GM13977 (cell line): ENCODE measurements at regions of chr4 and their contacts with region 1.

Region 1: DNA sequence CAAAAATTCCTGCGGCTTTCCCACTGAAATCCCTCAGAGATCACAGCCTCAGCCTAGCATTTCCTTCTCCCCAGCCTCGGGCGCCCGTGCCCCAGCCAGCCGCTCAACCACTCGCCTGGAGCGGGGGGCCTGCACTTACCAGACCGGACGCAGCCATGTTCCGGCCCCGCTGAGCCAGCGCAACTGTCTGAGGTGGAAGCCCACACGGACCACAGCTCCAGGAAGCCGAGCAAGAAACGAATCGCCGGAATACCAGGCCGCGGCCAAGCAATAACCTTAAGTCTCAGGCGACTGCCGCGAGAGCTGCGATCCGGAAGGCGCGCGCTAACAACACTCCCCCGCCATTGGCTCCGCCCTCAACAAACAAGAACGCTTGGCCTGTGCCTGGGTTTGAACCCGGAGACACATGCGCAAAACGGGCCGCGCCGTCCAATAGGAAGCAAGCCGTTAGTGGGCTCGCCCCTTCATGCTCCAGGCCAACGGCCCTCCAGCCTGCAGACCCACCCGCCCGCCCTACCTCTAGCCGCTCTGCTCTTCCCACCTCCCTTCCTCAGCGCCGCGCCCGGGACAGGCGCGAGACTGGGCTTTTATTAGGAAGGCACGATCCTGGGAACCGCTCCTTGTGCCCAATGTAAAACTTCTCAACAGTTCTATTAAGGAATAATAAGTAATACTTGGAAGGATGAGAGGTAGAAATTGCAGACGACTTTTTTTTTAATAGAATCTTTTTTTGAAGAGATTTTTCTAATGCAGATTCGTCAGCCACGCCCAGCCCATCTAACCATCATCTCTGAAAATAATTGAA is at the start of gene CENPC:
- DNase-seq: peak; percentile 86
- CTCF ChIP-seq: no peak

Region 2: DNA sequence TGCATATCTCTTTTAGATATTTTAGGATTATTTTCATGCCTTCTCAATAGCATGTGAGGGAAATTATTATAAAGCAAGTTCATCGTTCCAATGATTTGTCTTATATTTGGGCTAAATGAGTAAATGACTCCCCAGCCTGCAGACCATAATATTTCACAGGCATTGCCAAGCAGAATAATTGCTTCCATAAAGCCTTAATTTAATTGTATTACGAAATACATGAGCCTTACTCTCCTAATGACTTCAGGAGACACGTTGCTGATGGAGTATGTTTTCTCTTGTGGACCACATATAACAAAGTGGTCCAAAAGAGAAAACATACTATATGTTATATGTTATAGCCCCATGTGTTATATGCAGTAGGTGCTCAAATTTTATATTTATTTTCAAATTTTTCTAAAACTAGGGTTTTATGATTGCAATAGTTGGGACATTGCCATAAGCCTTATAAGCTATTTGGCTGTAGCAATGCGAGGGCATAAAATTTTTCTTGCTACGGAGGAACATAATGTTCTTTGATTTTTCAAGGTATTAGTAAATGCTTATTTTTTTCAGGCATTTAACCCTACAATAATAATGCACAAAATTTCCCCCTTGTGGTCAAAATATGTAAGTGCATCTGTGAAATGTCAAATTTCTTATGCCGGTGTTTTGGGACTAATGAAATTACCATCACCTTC is 364.6 kb after region 1 on chr4:
- in situ Hi-C with region 1: loop called (anchors 10 kb)
- DNase-seq: no peak
- CTCF ChIP-seq: peak; percentile 49

Region 3: GRCh38 chr4:68152411-68152810 is 607.0 kb after region 1 on chr4:
- in situ Hi-C with region 1: loop called (anchors 25 kb)
- DNase-seq: no peak
- CTCF ChIP-seq: no peak

Region 4: DNA sequence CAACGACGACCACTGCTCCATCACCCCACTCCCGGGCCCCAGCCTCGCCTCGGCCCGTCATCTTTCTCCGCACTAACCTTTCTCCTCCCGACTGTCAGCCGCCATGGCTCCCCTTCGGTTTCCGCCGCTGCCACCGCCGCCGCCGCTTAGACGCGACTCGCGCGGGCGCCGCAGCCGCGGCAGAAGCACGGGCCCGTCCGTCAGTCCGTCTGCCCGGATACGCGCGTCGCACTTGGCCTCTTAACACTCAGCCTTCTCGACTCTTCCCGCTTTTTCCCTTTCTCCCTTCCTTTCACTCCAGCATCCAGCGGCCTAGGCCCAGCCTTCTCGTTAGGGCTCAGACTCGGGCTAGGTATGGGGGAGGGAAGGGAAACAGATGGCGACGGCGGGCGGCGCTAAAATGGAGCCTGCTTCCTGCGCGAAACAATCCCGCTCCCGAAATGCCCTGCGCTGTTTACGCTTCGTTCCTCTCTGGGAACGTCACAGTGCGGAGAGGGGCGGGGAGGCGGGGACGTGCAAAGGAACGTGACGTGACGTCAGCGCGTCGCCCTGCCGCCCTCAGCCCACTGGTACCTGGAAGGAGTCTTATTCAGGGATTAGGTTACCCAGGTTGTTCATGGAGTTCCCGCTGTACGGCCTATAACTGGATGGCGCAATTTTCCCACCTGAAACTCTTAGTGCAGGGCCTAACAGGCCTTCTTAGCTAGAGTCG is 804.4 kb after region 1 on chr4 and contains the start of gene YTHDC1:
- in situ Hi-C with region 1: no loop called
- DNase-seq: peak; percentile 91
- CTCF ChIP-seq: no peak